Naive thymus-derived CD4-positive, alpha-beta T cell (primary cell): ENCODE measurements at regions of chr10 and their contacts with region 1.

Region 1: DNA sequence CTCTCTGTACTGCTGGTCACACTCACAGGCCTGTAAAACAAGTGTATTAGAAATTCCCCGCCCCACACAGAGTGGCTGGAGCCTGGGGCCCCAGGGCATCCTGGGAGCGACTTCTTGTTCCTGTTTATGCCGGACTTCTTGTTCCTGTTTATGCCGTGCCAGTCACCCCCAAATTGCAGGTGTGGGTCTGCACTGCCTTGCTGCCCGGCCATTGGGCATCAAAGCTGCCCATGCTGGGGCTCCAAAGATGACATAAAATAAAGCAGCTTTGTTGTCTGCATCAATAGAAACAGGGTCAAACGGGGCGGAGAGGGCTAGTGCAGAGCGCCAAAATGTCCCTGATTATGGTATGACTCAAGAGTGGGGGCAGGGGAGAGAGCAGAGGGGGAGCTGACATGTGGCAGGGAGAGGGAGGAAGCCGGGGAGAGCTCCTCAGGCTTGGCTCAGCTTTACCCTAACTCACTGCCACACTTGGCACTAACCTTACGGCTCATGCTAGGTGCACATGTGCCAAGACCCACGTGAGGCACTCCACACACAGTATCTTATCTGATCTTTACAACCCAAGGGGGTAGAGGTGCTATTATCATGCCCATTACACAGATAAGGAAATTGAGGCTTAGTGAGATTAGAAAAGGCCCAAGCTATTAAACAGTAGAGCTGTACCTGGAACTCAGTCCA is 98.4 kb downstream of the PIP4K2A start:
- DNase-seq: no peak
- ATAC-seq: peak; percentile 45
- H3K4me3 ChIP-seq: peak overlapping the region; percentile 38
- H3K4me3 Mint-ChIP-seq: peak overlapping the region; percentile 5 to 72 (median 26)
- H3K27ac ChIP-seq: peak overlapping the region; percentile 16
- H3K27ac Mint-ChIP-seq: peak overlapping the region; percentile 26 to 94 (median 75)
- H3K4me1 ChIP-seq: peaks cover 77 to 98% of the 10 kb centered on the region in 2 donors
- H3K4me1 Mint-ChIP-seq: peaks cover 75 to 100% (median 96%) of the 10 kb centered on the region in 7 donors
- H3K27me3 ChIP-seq: no peaks in the 10 kb centered on the region
- H3K27me3 Mint-ChIP-seq: no peaks in the 10 kb centered on the region

Region 2: DNA sequence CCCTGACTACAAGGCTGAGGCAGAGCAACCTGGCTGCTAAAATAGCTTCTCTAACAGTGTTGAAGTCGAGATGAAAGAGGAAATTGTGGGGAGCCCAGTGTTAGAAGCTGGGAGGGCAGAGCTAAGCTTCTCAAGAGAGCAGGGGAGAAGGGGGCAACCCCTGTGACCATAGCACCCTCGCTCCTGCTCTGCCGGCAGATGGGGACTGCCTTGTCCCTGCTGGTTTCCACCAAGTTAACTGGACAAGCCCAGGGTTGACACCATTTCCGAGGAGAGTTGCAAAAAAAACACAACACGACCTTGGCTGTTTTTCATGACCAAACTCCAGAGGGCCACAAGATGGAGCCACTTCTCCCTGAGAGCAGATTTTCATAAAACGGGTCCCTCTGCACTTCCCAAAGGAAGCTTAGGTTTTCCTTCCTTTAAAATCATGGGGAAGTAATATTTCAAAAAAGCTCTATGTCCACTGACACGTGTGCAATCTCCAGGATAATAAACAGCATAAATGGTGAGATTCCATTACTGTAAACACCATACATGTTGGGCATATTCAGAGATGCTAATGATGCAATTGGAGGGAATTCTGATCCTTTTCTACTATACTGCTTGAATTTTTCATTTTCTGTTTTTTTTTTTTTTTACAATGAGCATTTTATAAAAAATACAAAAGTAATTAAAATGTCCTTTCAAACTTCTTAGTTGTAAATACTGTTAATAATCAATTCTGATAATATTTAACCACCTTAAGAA is 42.0 kb before region 1 on chr10:
- CTCF ChIA-PET with region 1: interaction called, 4 read pairs
- POLR2A ChIA-PET with region 1: no interaction called
- intact Hi-C with region 1: loop called (anchors 1 kb)
- DNase-seq: peak in 5 of 9 donors; percentile 16 to 26 (median 24)
- ATAC-seq: peak; percentile 67
- H3K4me3 ChIP-seq: no peak overlapping the region
- H3K4me3 Mint-ChIP-seq: peak overlapping the region in 2 of 10 donors; percentile 24 to 66
- H3K27ac ChIP-seq: no peak overlapping the region
- H3K27ac Mint-ChIP-seq: peak overlapping the region; percentile 8 to 91 (median 62)
- H3K4me1 ChIP-seq: peaks cover 0 to 33% of the 10 kb centered on the region in 2 donors
- H3K4me1 Mint-ChIP-seq: peaks cover 32 to 80% (median 62%) of the 10 kb centered on the region in 7 donors
- H3K27me3 ChIP-seq: no peaks in the 10 kb centered on the region
- H3K27me3 Mint-ChIP-seq: no peaks in the 10 kb centered on the region

Region 3: DNA sequence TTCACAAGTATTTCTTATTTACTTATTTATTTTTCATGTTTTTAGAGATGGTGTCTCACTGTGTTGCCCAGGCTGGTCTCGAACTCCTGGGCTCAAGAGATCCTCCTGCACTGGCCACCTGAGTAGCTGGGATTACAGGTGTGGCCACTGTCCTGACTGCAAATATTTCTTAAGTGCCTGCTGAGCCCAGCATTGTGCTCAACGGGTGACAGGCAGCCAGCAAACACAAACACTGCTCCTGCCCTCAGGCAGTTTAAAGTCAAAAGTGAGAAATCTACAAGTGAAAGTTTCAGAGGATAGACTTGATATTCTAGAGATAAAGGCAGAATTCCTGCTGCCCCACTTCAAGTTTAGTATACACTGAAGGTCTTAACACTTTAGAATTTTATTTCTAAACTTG is 13.3 kb before region 1 on chr10:
- CTCF ChIA-PET with region 1: interaction called, 4 read pairs
- POLR2A ChIA-PET with region 1: interaction called, 13 read pairs
- intact Hi-C with region 1: loop called in 1 of 2 experiments (anchors 1 kb)
- DNase-seq: no peak
- ATAC-seq: no peak
- H3K4me3 ChIP-seq: no peak overlapping the region
- H3K4me3 Mint-ChIP-seq: peak overlapping the region in 3 of 10 donors; percentile 3 to 56 (median 4)
- H3K27ac ChIP-seq: no peak overlapping the region
- H3K27ac Mint-ChIP-seq: peak overlapping the region in 8 of 9 donors; percentile 16 to 91 (median 68)
- H3K4me1 ChIP-seq: peaks cover 58 to 89% of the 10 kb centered on the region in 2 donors
- H3K4me1 Mint-ChIP-seq: peaks cover 68 to 95% (median 90%) of the 10 kb centered on the region in 7 donors
- H3K27me3 ChIP-seq: no peaks in the 10 kb centered on the region
- H3K27me3 Mint-ChIP-seq: no peaks in the 10 kb centered on the region

Region 4: DNA sequence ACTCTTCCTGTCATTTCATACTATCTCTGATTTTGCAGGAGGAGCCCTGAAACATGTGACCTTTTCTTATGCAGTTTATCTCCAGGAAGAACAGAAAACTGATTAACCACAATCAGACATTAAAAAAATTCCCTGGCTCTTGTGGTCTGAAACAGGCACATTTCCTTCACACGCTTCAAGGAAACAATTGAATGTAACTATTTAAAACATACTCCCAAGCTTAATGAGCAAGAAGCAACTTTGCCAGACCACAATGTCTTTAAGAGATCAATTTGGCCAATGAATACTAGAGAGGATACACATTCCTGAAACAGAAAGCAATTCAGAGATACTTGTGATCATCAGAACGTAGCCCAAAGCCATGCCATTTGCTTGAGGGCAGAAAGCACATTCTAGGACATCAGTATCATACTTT is 32.6 kb after region 1 on chr10:
- CTCF ChIA-PET with region 1: interaction called, 4 read pairs
- POLR2A ChIA-PET with region 1: interaction called, 9 read pairs
- intact Hi-C with region 1: loop called (anchors 1 to 2 kb)
- DNase-seq: no peak
- ATAC-seq: no peak
- H3K4me3 ChIP-seq: peak overlapping the region; percentile 37
- H3K4me3 Mint-ChIP-seq: peak overlapping the region in 9 of 10 donors; percentile 60 to 89 (median 82)
- H3K27ac ChIP-seq: peak overlapping the region; percentile 53
- H3K27ac Mint-ChIP-seq: peak overlapping the region; percentile 75 to 97 (median 93)
- H3K4me1 ChIP-seq: peaks cover 97 to 98% of the 10 kb centered on the region in 2 donors
- H3K4me1 Mint-ChIP-seq: peaks cover 79 to 96% (median 90%) of the 10 kb centered on the region in 7 donors
- H3K27me3 ChIP-seq: no peaks in the 10 kb centered on the region
- H3K27me3 Mint-ChIP-seq: no peaks in the 10 kb centered on the region

Region 5: DNA sequence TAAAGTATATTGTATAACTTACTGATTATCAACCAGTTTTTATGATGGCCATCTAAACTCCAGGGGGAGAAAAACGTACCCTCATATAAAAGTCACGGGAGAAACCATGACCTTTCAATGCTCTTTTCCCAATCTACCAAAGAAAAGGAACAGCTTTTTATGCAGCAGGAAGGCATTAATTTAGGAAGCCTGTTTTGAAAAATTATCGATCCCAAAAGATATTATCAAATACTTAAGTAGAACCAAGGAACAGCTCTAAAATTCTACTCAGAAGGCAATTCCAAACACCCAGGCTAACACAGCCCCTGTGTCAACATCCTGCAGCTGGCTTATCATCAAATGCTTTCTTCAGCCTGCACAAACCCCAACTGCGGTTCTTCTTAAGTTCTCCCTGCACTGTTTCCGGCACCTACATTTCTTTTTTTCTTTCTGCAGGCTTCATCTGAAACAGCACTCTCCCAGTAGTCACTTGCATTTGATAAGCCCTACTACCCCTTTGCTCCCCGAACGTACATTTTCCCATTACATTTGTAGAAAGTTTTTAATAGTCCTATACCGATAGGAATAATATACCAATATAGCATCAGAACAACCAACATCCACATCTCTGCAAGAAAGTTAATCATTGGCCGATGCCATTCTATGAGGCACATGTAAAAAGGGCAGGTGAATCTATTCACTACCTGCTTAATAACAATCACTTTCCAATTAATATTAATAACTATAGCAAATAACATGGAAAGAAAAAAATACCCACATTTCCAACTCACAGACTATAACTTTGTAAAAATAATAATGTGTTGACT is 50.5 kb after region 1 on chr10:
- CTCF ChIA-PET with region 1: interaction called, 4 read pairs
- POLR2A ChIA-PET with region 1: interaction called, 3 read pairs
- intact Hi-C with region 1: loop called in 1 of 2 experiments (anchors 1 kb)
- DNase-seq: peak in 8 of 9 donors; percentile 49 to 91 (median 86)
- ATAC-seq: peak; percentile 96
- H3K4me3 ChIP-seq: peak overlapping the region; percentile 57
- H3K4me3 Mint-ChIP-seq: peak overlapping the region; percentile 78 to 97 (median 84)
- H3K27ac ChIP-seq: peak overlapping the region; percentile 59
- H3K27ac Mint-ChIP-seq: peak overlapping the region; percentile 74 to 97 (median 92)
- H3K4me1 ChIP-seq: peaks cover 68 to 75% of the 10 kb centered on the region in 2 donors
- H3K4me1 Mint-ChIP-seq: peaks cover 34 to 96% (median 89%) of the 10 kb centered on the region in 7 donors
- H3K27me3 ChIP-seq: no peaks in the 10 kb centered on the region
- H3K27me3 Mint-ChIP-seq: no peaks in the 10 kb centered on the region

Region 6: GRCh38 chr10:23067939-23068775 is 452.2 kb after region 1 on chr10:
- CTCF ChIA-PET with region 1: no interaction called
- POLR2A ChIA-PET with region 1: no interaction called
- intact Hi-C with region 1: no loop called
- DNase-seq: peak; percentile 23 to 66 (median 48)
- ATAC-seq: peak; percentile 78
- H3K4me3 ChIP-seq: no peak overlapping the region
- H3K4me3 Mint-ChIP-seq: no peak overlapping the region
- H3K27ac ChIP-seq: no peak overlapping the region
- H3K27ac Mint-ChIP-seq: no peak overlapping the region
- H3K4me1 ChIP-seq: no peaks in the 10 kb centered on the region
- H3K4me1 Mint-ChIP-seq: peaks cover 0 to 2% (median 0%) of the 10 kb centered on the region in 7 donors
- H3K27me3 ChIP-seq: no peaks in the 10 kb centered on the region
- H3K27me3 Mint-ChIP-seq: peaks cover 0 to 6% (median 2%) of the 10 kb centered on the region in 5 donors

Region 7: GRCh38 chr10:23158370-23158769 is 542.4 kb after region 1 on chr10:
- CTCF ChIA-PET with region 1: no interaction called
- POLR2A ChIA-PET with region 1: no interaction called
- intact Hi-C with region 1: no loop called
- DNase-seq: peak in 7 of 9 donors; percentile 10 to 37 (median 30)
- ATAC-seq: peak; percentile 63
- H3K4me3 ChIP-seq: no peak overlapping the region
- H3K4me3 Mint-ChIP-seq: peak overlapping the region in 2 of 10 donors; percentile 24 to 30
- H3K27ac ChIP-seq: no peak overlapping the region
- H3K27ac Mint-ChIP-seq: no peak overlapping the region
- H3K4me1 ChIP-seq: no peaks in the 10 kb centered on the region
- H3K4me1 Mint-ChIP-seq: peaks cover 0 to 22% (median 0%) of the 10 kb centered on the region in 7 donors
- H3K27me3 ChIP-seq: no peaks in the 10 kb centered on the region
- H3K27me3 Mint-ChIP-seq: peaks cover 16 to 44% (median 34%) of the 10 kb centered on the region in 5 donors